ENCODE measurements at regions of chr1 and their contacts with region 1.

Region 1: DNA sequence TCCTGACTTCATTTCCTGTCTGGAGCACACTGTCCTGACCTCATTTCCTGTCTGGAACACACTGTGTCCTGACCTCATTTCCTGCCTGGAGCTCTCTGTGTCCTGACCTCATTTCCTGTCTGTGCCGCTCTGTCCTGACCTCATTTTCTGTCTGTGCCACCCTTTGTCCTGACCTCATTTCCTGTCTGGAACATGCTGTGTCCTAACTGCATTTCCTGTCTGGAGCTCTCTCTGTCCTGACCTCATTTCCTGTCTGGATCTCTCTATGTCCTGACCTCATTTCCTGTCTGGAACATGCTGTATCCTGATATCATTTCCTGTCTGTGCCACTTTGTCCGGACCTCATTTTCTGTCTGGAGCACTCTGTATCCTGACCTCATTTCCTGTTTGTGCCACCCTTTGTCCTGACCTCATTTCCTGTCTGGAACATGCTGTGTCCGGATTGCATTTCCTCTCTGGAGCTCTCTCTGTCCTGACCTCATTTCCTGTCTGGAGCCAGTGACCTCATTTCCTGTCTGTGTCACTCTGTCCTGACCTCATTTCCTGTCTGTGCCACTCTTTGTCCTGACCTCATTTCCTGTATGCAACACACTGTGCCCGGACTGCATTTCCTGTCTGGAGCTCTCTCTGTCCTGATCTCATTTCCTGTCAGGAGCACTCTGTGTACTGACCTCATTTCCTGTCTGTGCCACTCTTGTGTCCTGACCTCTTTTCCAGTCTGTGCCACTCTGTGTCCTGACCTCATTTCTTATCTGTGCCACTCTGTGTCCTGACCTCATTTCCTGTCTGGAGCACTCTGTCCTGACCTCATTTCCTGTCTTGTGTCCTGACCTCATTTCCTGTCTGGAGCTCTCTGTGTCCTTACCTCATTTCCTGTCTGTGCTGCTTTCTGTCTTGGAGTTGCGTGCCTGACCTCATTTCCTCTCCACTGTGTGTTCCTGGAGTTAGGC is 27.6 kb downstream of the SKI start:
- DNase-seq: peak; percentile 87
- ATAC-seq: peak; percentile 71
- H3K4me3 Mint-ChIP-seq: no peak overlapping the region
- H3K27ac Mint-ChIP-seq: no peak overlapping the region
- H3K4me1 Mint-ChIP-seq: peaks cover 54% of the 10 kb centered on the region
- H3K27me3 Mint-ChIP-seq: no peaks in the 10 kb centered on the region

Region 2: DNA sequence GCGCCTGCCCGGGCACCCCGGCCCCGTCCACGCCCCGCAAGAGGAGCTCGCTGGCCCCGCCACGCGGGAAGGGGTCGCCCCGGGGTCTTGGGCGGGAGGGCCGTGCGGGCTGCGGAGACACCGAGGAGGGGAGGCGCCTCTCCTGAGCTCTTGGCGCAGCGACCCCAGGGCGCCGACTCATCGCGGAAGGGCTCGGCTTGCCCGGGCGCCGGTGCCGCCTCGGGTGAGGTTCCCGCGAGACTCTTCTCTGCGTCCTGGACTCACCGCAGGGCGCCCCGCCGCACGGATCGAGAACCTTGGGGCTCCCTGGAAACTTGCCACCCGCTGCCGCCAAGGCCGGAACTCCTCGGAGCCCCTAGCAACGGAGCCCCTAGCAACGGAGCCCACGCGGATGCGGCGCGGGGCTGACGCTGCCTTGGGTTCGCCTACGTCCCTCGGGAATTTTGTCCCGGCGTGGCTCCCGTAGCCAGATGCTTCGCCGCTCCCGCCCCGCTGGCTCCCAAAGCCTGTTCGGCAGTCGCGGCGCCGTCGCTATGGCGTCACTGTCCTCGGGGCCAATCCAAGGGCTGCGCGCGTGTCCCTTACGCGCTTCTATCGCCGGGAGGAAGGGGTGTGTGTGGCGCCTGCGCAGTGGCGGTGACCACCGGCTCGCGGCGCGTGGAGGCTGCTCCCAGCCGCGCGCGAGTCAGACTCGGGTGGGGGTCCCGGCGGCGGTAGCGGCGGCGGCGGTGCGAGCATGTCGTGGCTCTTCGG is 744.0 kb before region 1 on chr1 and contains the start of gene ATAD3A:
- CTCF ChIA-PET with region 1: no interaction called
- POLR2A ChIA-PET with region 1: no interaction called
- intact Hi-C with region 1: no loop called
- DNase-seq: peak; percentile 99
- ATAC-seq: peak; percentile 97
- H3K4me3 Mint-ChIP-seq: peak within 1 kb of the TSS; percentile 93
- H3K27ac Mint-ChIP-seq: peak within 1 kb of the TSS; percentile 97
- H3K4me1 Mint-ChIP-seq: peaks cover 7% of the 10 kb centered on the region
- H3K27me3 Mint-ChIP-seq: no peaks in the 10 kb centered on the region
- total RNA-seq, gene ATAD3A: 39.9 to 42.9 TPM

Region 3: DNA sequence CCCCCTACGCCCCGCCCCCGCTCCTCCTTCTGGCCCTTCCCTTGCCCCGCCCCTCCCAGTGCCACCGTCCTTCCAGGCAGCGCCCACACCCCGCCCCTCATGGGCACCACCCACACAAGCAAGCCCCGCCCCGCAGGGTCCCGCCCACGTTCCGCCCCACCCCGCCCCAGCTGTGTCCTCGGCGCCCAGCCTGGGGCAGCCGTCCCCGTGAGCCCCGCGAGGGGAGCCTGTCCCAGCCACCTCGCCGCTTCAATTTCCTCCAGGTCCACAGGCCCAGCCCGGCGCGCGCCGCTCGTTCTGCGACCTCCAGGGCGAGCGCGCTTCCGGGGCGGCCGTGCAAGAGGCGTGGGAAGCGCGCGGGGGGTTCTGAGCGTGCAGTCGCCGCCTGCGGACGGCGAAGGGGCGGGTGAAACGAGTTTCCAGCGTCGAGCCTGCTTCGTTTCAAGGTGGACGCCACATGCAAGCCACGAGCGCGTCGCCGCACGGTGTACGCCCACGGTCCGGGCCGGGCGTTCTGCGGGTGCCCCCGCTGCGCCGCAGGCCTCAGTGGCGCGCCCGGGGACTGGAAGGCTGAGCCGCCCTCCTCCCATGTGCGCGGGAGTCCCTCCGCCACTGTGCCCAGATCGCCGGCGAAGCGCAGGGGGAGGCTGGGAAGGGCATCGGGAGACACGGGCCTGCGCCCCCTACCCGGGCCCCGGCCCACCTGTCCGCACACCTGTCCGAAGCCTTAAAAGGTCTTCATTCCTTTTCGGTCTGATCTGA is 50.3 kb before region 1 on chr1:
- CTCF ChIA-PET with region 1: no interaction called
- POLR2A ChIA-PET with region 1: no interaction called
- intact Hi-C with region 1: loop called in 1 of 2 experiments (anchors 2 kb)
- DNase-seq: peak; percentile 98
- ATAC-seq: peak; percentile 88
- H3K4me3 Mint-ChIP-seq: peak overlapping the region; percentile 51
- H3K27ac Mint-ChIP-seq: no peak overlapping the region
- H3K4me1 Mint-ChIP-seq: peaks cover 3% of the 10 kb centered on the region
- H3K27me3 Mint-ChIP-seq: no peaks in the 10 kb centered on the region

Region 4: DNA sequence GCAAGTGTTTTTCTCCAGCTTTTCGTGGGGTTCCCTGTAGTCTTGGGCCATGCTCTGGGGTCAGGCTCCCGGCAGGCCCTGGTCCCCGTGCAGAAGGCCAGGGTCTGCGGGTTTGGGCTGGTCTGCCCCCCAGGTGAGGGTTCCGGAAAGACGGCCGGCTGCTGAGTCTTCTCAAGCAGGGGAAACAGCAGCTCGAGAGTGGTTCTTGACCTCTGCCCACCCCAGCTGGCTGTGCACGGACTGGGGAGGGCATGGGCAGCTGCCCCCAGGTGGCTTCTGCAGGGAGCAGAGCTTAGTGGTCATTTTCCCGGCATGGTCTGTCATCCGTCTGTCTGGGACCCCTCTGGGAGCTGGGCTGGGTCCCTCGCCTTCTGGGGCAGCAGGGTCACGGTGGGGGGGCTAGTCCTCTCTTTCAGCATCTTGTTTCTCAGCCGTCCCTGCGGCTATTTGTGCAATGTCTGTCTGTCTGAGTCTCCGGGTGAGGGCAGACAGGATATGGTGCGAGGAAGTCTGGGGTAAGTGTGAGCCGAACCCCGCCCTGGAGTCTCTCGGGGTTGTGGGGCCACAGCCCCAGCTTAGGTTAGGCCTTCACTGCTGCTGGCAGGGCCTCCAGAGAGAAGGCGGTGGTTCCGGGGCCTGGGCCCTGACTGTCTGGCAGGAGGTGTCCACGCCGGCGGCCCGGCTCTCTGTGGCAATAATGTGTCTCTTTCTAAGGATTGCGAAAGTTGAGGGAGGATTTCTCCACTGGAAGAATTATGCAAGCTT is 21.5 kb before region 1 on chr1:
- CTCF ChIA-PET with region 1: interaction called, 3 read pairs
- POLR2A ChIA-PET with region 1: no interaction called
- intact Hi-C with region 1: loop called in 1 of 2 experiments (anchors 1 kb)
- DNase-seq: peak; percentile 81
- ATAC-seq: peak; percentile 73
- H3K4me3 Mint-ChIP-seq: peak overlapping the region; percentile 73
- H3K27ac Mint-ChIP-seq: peak overlapping the region; percentile 90
- H3K4me1 Mint-ChIP-seq: peaks cover 59% of the 10 kb centered on the region
- H3K27me3 Mint-ChIP-seq: no peaks in the 10 kb centered on the region

Region 5: DNA sequence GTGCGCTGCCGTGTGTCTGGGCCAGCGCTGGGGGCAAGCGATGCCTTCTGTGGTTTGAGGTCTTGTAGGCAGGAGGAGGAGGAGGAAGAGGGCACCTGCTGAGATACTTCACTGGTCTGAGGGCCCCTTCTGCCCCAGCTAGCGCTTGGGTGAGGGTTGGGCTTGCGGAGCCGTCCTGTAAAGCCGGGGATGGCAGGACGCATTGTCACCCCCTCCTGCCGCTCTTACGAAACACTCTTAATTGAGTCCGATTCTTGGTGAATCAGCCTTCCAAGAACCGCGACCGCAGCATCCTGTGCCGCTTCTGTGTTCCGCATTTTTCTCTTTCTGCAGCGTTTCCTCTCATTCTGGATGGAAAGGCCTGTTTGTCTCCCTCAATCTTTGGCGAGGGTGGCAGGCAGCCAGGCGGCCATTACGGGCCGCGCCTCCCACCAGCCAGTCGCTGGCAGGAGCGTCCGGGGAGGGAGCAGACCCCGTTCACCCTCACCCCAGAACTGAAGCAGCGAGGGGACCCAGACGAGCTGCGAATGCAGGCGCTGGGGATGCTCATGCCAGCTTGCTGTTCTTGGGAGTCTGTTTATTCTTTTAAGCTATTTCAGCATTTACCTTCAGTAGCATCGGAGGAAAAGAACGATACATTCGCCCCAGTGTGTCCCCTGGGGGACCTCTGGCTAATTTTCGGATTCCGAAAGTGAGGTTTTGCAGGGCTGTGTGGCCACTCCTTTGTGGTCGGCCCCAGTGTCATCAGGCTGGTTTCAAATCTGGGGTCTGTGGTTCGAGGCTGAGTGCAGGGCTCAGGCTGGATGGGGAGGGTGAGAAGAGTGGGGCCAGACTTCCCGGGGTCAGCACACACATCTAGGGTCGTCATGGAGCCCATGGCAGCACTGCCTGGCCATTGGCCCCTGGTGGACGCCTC is 35.2 kb after region 1 on chr1:
- CTCF ChIA-PET with region 1: interaction called, 9 read pairs
- POLR2A ChIA-PET with region 1: interaction called, 3 read pairs
- intact Hi-C with region 1: loop called (anchors 1 kb)
- DNase-seq: peak; percentile 94
- ATAC-seq: peak; percentile 89
- H3K4me3 Mint-ChIP-seq: peak overlapping the region; percentile 75
- H3K27ac Mint-ChIP-seq: peak overlapping the region; percentile 95
- H3K4me1 Mint-ChIP-seq: peaks cover 87% of the 10 kb centered on the region
- H3K27me3 Mint-ChIP-seq: no peaks in the 10 kb centered on the region

Region 6: GRCh38 chr1:2314803-2315673 is 59.3 kb after region 1 on chr1:
- CTCF ChIA-PET with region 1: interaction called, 10 read pairs
- POLR2A ChIA-PET with region 1: interaction called, 3 read pairs
- intact Hi-C with region 1: no loop called
- DNase-seq: peak; percentile 71
- ATAC-seq: peak; percentile 20
- H3K4me3 Mint-ChIP-seq: peak overlapping the region; percentile 21
- H3K27ac Mint-ChIP-seq: peak overlapping the region; percentile 58
- H3K4me1 Mint-ChIP-seq: peaks cover 9% of the 10 kb centered on the region
- H3K27me3 Mint-ChIP-seq: no peaks in the 10 kb centered on the region